Calu3 (cell line): ENCODE measurements at regions of chr16 and their contacts with region 1.

Region 1: DNA sequence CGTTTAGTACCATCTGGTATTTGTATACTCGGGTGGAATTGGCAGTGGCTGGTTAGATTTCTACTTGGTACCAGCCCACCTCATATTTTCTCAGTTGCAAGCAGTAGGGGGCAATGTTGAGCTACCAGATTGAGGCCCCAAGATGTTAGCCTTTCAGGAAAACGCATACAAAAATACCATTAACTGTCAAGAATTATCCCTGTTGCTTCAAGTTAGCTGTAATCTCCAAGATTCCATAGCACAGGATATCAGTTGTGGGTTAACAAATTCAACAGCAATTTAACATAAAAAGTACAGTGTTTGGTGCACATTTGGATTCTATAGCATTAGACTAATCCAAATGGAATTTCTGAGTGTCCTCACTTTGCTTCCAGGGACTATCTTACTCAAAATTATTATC is 188.2 kb downstream of the FTO start:
- DNase-seq: peak; percentile 67
- H3K4me3 Mint-ChIP-seq: no peak overlapping the region
- H3K27ac Mint-ChIP-seq: no peak overlapping the region
- H3K4me1 Mint-ChIP-seq: peaks cover 11% of the 10 kb centered on the region
- H3K27me3 Mint-ChIP-seq: no peaks in the 10 kb centered on the region
- CTCF ChIP-seq: peak; percentile 31

Region 2: GRCh38 chr16:53817117-53817755 is 74.9 kb before region 1 on chr16:
- CTCF ChIA-PET with region 1: no interaction called
- intact Hi-C with region 1: no loop called
- DNase-seq: no peak
- H3K4me3 Mint-ChIP-seq: no peak overlapping the region
- H3K27ac Mint-ChIP-seq: no peak overlapping the region
- H3K4me1 Mint-ChIP-seq: peaks cover 9% of the 10 kb centered on the region
- H3K27me3 Mint-ChIP-seq: no peaks in the 10 kb centered on the region
- CTCF ChIP-seq: no peak

Region 3: DNA sequence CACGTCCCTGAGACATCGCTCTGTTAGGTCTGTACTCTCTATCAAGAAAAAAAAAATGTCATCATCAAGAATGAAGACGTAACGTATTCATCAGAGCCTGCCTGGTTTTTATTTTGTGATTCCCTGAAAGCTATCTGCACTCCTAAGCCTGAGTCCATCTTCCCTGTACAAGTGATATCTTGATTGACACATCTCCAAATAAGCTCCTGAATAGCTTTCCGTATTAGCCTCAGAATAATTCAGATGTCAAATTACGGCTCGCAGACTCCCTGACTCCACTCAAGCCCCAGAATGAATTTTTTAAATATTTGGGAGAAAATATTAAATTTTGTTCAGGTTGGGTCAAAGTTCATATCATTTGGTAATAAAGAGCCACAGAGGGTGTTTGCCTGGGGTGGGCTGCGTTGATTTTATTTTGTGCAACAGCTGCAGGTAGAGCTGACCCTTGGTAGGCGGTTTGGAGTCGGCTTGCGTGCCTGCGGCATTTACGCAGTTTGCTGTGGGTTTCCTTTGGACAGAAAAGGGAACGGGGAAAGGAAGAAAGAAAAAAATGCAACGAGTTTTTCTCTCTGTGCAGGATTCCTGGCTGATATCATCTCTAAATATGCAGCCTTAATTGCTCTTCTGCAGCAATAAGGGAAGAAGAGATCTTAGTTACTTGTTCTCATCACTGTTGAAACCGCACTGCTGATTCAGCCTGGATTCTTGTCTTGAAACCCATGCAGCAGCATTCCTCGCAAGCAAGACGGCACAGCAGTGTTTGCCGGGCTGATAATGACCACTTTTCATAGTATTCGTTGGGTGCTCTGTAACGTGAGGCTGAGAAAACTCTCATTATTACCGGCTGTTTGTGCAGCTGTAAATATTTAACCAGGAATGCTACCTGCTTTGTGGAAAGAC is 279.7 kb after region 1 on chr16:
- CTCF ChIA-PET with region 1: no interaction called
- intact Hi-C with region 1: loop called (anchors 5 kb)
- DNase-seq: peak; percentile 43
- H3K4me3 Mint-ChIP-seq: peak overlapping the region; percentile 13
- H3K27ac Mint-ChIP-seq: no peak overlapping the region
- H3K4me1 Mint-ChIP-seq: peaks cover 28% of the 10 kb centered on the region
- H3K27me3 Mint-ChIP-seq: peaks cover 41% of the 10 kb centered on the region
- CTCF ChIP-seq: no peak

Region 4: DNA sequence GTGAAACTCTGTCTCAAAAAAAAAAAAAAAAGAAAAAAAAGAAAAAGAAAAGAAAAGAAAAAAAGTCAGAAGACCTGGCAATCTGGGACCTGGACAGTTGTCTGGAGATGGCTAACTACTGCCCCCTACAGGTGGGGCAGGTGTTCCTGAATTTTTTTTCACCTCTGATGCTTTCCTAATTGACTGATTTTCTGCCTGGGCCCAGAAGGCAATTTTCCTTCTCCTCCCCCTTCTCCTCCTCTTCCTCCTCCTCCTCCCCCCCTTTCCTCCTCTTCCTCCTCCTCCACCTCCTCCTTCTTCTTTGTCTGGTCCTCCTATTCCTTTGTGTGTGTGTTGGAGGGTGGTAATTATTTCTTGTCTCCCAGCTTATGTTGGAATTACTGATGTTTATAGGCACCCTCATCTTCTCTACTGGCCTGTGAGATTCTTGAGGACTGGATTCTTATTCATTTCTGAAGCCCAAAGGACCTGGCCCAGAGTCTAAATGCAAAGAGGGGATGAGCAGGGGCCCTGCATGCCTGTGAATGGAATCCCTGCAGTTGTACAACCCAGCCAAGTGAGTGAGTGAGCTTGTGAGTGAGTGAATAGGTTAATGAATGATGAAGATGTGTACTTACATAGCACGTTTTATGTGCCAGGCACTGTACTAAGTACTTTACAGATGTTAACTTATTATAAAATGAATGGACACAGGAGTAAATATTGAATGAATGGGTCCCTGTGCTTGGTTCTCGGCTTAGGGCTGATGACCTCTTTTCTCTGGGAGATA is 1065.4 kb after region 1 on chr16:
- CTCF ChIA-PET with region 1: no interaction called
- intact Hi-C with region 1: loop called (anchors 5 kb)
- DNase-seq: peak; percentile 81
- H3K4me3 Mint-ChIP-seq: no peak overlapping the region
- H3K27ac Mint-ChIP-seq: no peak overlapping the region
- H3K4me1 Mint-ChIP-seq: no peaks in the 10 kb centered on the region
- H3K27me3 Mint-ChIP-seq: peaks cover 33% of the 10 kb centered on the region
- CTCF ChIP-seq: peak; percentile 84